IMR-90 (cell line): ENCODE measurements at regions of chr13 and their contacts with region 1.

Region 1: DNA sequence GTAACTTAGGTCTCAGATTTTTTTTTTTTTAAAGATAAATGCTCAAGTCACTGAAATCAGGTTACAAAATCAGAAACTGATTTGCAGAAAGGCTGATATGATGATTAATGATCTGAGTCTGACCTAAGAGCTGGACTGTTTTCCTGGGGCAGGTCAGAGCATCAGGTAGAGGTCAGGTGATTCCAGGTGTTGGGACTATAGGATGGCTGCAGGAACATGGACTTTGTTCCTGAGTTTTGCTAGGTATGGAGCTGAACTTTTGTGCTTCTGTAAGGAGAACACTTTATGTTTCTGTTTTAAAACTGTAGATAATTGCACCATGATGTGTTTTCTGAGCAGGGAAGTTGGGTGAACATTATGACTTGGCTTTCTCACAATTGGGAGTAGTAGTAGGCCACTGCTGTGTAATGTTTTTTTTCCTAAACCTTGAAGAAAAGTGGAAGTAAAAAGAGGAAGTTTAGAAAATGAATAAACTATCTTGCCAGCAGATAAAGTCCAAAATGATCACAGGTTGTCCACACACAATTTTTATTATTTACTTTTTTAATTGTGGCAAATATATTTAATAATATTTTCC is 297.2 kb downstream of the DCT start:
- DNase-seq: no peak
- ATAC-seq: no peak
- H3K4me3 ChIP-seq: no peak overlapping the region
- H3K27ac ChIP-seq: no peak overlapping the region
- H3K4me1 ChIP-seq: no peaks in the 10 kb centered on the region
- H3K27me3 ChIP-seq: no peaks in the 10 kb centered on the region
- CTCF ChIP-seq: no peak
- POLR2A ChIP-seq: no peak
- RAD21 ChIP-seq: no peak

Region 2: DNA sequence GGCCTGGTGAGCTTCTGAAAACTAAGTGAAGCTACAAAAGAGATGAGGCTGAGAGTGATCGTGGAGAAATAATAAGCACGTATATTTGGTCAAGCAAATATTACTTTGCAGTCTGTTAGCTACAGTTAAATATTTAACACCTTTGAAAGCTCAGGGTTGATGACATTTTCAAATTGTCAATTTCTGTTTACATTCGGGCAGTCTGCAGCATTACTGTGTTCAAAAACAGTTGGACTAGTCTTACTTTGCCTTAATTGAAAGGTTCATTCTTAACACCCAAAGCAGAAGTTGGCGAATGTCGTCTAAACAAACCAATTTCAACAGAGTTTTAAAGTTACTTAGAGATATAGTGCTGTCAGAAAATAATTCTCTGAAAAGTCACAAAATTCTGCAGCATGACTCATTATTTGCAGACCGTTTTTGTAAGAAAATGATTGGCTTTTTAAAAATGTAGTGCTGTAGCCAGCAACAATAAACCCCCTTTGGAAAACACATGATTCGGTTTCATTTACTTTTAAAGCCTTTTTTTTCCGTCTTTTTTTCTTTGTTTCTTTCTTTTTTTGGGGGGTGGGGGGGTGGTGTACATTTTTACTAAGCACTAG is 406.7 kb before region 1 on chr13:
- CTCF ChIA-PET with region 1: interaction called, 10 read pairs
- POLR2A ChIA-PET with region 1: no interaction called
- dilution Hi-C with region 1: no loop called
- in situ Hi-C with region 1: no loop called
- intact Hi-C with region 1: no loop called
- DNase-seq: peak; percentile 85
- ATAC-seq: peak; percentile 73
- H3K4me3 ChIP-seq: peak overlapping the region; percentile 36; the same call in 1 of the 2 replicates
- H3K27ac ChIP-seq: peak overlapping the region; percentile 77; the same call in 1 of the 2 replicates
- H3K4me1 ChIP-seq: peaks cover 7% of the 10 kb centered on the region; the same call in 1 of the 2 replicates
- H3K27me3 ChIP-seq: no peaks in the 10 kb centered on the region
- CTCF ChIP-seq: no peak
- POLR2A ChIP-seq: no peak
- RAD21 ChIP-seq: no peak